ENCODE measurements at regions of chr12 and their contacts with region 1.

Region 1: GRCh38 chr12:48197971-48198671 is 5.0 kb downstream of the OR10AD1 start:
- DNase-seq: peak; percentile 97 to 98
- ATAC-seq: peak; percentile 98 to 100 (median 100)
- H3K4me3 ChIP-seq: peak overlapping the region; percentile 38 to 97 (median 75)
- H3K27ac ChIP-seq: peak overlapping the region; percentile 89 to 100 (median 100)
- H3K4me1 ChIP-seq: peaks cover 0 to 36% (median 23%) of the 10 kb centered on the region in 9 donors
- H3K27me3 ChIP-seq: peaks cover 0 to 3% (median 0%) of the 10 kb centered on the region in 7 donors
- CTCF ChIP-seq: no peak

Region 2: DNA sequence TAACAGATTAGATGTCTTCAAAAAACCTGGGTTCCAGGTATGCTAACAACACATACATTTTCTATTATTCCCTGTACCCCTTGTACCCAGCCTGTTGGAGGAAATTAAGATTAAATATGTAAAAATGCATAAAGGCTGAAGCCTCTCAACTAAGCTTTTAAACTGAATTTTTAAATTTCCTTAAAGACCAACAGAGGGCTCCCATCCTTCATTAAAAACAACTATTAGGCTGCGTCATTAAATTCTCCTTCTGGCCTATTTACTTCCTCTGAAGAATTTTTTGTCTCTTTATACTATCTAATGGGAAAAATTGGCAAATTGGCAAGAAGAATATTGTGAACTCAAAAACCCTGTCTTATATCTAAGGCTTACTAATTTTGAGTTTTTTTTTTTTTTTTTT is 114.1 kb before region 1 on chr12:
- intact Hi-C with region 1: loop called in 1 of 10 experiments (anchors 10 kb)
- DNase-seq: no peak
- ATAC-seq: peak in 3 of 8 donors; percentile 26 to 54 (median 51)
- H3K4me3 ChIP-seq: no peak overlapping the region
- H3K27ac ChIP-seq: no peak overlapping the region
- H3K4me1 ChIP-seq: peaks cover 0 to 1% (median 0%) of the 10 kb centered on the region in 9 donors
- H3K27me3 ChIP-seq: no peaks in the 10 kb centered on the region
- CTCF ChIP-seq: peak in 7 of 9 donors; percentile 25 to 64 (median 53)

Region 3: DNA sequence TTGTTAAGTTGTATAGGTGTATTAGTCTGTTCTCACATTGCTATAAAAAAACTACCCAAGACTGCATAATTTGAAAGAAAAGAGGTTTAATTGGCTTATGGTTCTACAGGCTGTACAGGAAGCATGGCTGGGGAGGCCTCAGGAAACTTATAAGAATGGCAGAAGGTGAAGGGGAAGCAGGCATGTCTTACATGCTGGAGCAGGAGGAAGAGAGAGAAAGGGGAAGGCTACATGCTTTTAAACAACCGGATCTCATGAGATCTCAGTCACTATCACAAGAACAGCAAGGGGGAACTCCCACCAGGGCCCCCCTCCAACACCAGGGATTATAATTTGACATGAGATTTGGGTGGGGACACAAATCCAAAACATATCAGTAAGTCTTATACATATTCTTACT is 65.5 kb after region 1 on chr12:
- intact Hi-C with region 1: no loop called
- DNase-seq: no peak
- ATAC-seq: no peak
- H3K4me3 ChIP-seq: no peak overlapping the region
- H3K27ac ChIP-seq: no peak overlapping the region
- H3K4me1 ChIP-seq: no peaks in the 10 kb centered on the region
- H3K27me3 ChIP-seq: peaks cover 0 to 5% (median 0%) of the 10 kb centered on the region in 7 donors
- CTCF ChIP-seq: no peak

Region 4: DNA sequence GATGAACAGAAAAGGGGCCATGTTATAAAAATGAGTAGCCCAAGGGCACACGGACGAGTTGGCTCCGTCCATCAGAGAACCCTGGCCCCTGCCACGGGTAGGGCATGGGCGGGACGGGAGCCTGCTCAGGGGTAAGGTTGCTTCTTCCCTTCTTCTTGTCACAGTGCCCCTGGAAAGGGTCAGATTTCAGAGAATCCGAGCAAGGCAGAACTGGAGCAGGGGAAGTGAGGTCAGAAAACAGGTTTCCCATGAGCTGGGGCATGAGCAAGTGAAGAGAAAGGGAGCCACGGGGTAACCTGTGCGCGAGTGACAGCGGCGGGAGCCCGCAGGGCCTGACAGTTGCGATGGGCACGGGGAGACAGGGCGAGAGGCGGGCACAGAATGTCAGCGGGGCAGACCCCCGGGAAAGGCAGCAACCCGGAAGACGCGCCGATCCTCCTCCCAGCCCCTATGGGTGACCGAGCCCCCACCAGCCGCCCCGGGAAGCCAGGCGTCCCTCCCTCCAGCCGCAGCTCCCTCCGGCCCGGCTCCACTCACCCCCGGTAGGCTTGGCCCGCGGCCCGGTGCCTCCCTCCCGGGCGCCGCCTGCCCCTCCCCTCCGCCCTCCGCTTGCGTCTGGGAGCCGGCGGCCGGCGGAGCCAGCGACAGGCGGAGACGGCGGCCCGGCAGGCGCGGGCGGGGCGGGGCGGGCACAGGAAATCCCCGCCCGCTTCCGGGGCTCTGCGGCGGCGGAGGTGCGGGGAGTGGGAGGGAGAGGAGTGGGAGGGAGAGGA is 152.3 kb after region 1 on chr12 and contains the start of gene ZNF641:
- intact Hi-C with region 1: loop called in 5 of 10 experiments (anchors 5 to 10 kb)
- DNase-seq: peak; percentile 82 to 90
- ATAC-seq: peak; percentile 90 to 97 (median 94)
- H3K4me3 ChIP-seq: peak within 1 kb of the TSS; percentile 64 to 92 (median 77)
- H3K27ac ChIP-seq: peak within 1 kb of the TSS; percentile 94 to 99 (median 97)
- H3K4me1 ChIP-seq: peaks cover 0 to 43% (median 25%) of the 10 kb centered on the region in 9 donors
- H3K27me3 ChIP-seq: no peaks in the 10 kb centered on the region
- CTCF ChIP-seq: peak in 1 of 9 donors; percentile 16
- total RNA-seq, gene ZNF641: 13.8 to 19.1 (median 15.5) TPM

Measured in heart right ventricle (tissue), 16 donors.